GM12878 (cell line): ENCODE measurements at regions of chr12 and their contacts with region 1.

Region 1: GRCh38 chr12:94831081-94831751 is 172.3 kb downstream of the NDUFA12 start:
- DNase-seq: peak; percentile 98
- ATAC-seq: peak; percentile 89
- H3K4me3 ChIP-seq: peak overlapping the region; percentile 52
- H3K27ac ChIP-seq: peak overlapping the region; percentile 94
- H3K4me1 ChIP-seq: peaks cover 46% of the 10 kb centered on the region
- H3K27me3 ChIP-seq: no peaks in the 10 kb centered on the region
- CTCF ChIP-seq: no peak
- EP300 ChIP-seq: peak; percentile 92 to 94
- POLR2A ChIP-seq: peak; percentile 68
- RAD21 ChIP-seq: peak; percentile 25; the same call in 1 of the 2 replicates

Region 2: DNA sequence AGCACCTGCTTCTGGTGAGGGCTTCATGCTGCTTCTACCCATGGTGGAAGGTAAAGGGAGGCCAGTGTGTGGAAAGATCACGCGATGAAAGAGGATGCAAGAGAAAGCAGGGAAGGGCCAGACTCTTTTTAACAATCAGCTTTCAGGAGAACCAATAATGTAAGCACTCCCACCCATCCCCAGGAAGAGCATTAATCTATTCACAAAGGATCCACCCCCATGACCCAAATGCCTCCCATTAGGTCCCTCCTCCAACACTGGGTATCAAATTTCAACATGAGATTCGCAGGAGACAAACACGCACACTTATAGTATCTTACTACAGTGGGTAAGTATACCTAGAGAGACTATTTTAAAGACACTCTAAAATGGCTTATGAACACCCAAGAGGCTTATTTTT is 100.4 kb before region 1 on chr12:
- CTCF ChIA-PET with region 1: no interaction called
- POLR2A ChIA-PET with region 1: no interaction called
- RAD21 ChIA-PET with region 1: no interaction called
- SMC1A ChIA-PET with region 1: no interaction called
- in situ Hi-C with region 1: no loop called
- intact Hi-C with region 1: no loop called
- DNase-seq: no peak
- ATAC-seq: no peak
- H3K4me3 ChIP-seq: no peak overlapping the region
- H3K27ac ChIP-seq: no peak overlapping the region
- H3K4me1 ChIP-seq: peaks cover under 1% of the 10 kb centered on the region; the same call in 1 of the 2 replicates
- H3K27me3 ChIP-seq: no peaks in the 10 kb centered on the region
- CTCF ChIP-seq: no peak
- EP300 ChIP-seq: no peak
- POLR2A ChIP-seq: no peak
- RAD21 ChIP-seq: no peak

Region 3: DNA sequence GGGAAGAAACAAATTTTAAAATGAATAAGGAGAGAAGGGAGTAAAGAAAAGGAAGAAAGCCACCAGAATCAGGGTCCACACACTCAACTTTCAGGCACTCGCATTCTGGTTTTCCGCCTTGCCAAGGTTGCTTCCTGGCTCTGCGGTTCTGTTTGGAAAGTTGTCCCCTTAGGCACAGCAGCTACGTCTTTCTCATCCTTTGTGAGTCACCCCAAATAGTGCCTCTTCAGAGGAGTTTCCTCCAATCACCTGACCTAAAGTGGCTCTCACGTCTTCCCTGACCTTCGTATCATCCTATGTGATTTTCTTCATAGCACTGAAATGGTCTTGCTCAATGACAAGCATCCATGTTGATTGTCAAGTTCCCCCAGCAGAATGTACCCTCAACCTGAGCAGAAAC is 81.3 kb before region 1 on chr12:
- CTCF ChIA-PET with region 1: no interaction called
- POLR2A ChIA-PET with region 1: no interaction called
- RAD21 ChIA-PET with region 1: no interaction called
- SMC1A ChIA-PET with region 1: no interaction called
- in situ Hi-C with region 1: no loop called
- intact Hi-C with region 1: no loop called
- DNase-seq: no peak
- ATAC-seq: no peak
- H3K4me3 ChIP-seq: no peak overlapping the region
- H3K27ac ChIP-seq: no peak overlapping the region
- H3K4me1 ChIP-seq: no peaks in the 10 kb centered on the region
- H3K27me3 ChIP-seq: no peaks in the 10 kb centered on the region
- CTCF ChIP-seq: no peak
- EP300 ChIP-seq: no peak
- POLR2A ChIP-seq: no peak
- RAD21 ChIP-seq: no peak

Region 4: DNA sequence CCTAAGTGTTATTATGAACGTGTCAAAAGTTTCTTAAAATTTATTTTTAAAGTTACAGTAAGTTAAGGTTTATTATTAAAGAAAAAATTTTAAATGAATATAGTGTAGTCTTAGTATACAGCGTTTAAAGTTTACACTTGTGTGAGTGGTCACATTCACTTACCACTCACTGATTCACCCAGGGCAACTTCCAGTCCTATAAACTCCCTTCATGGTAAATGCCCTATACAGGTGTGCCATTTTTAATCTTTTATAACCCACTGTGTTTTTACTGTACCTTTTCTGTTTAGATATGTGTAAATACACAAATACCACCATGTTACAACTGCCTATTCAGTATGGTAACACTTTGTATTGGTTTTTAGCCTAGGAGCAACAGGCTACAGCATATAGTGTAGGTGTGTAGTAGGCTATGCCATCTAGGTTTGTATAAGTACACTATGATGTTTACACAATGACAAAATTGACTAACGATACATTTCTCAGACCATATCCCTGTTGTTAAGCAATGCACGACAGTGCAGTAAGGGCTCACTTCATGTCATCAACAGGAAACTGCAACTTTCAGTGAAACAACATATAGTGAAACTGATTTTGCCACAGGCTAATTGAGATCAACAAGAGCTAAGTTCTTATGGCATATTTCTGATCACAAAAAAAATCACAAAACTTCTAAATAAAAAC is 68.8 kb before region 1 on chr12:
- CTCF ChIA-PET with region 1: interaction called, 3 read pairs
- POLR2A ChIA-PET with region 1: no interaction called
- RAD21 ChIA-PET with region 1: interaction called, 10 read pairs
- SMC1A ChIA-PET with region 1: interaction called, 6 read pairs
- in situ Hi-C with region 1: no loop called
- intact Hi-C with region 1: no loop called
- DNase-seq: peak; percentile 56
- ATAC-seq: peak; percentile 85
- H3K4me3 ChIP-seq: no peak overlapping the region
- H3K27ac ChIP-seq: peak overlapping the region; percentile 35
- H3K4me1 ChIP-seq: peaks cover 30% of the 10 kb centered on the region
- H3K27me3 ChIP-seq: no peaks in the 10 kb centered on the region
- CTCF ChIP-seq: no peak
- EP300 ChIP-seq: peak in 1 of 2 experiments; percentile 46; a peak in 1 of 4 replicates
- POLR2A ChIP-seq: no peak
- RAD21 ChIP-seq: no peak

Region 5: DNA sequence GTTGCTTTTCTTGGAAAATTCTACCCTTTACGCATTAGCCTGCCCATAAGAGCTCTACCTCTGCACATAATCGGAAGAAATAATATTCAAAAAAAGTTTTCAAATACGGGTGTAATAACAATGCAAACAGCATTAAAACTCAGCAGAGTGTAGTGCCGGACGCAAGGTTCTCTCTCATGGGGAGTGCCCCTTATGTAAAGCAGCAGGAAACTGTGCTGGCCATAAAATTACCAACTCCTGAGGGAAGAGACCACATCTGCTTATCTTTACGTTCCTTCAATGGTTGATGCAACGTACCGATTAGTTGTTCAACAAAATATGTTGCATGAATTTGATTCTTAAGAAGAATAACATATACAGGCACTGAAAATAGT is 62.2 kb before region 1 on chr12:
- CTCF ChIA-PET with region 1: interaction called, 4 read pairs
- POLR2A ChIA-PET with region 1: interaction called, 8 read pairs
- RAD21 ChIA-PET with region 1: interaction called, 16 read pairs
- SMC1A ChIA-PET with region 1: interaction called, 18 read pairs
- in situ Hi-C with region 1: no loop called
- intact Hi-C with region 1: no loop called
- DNase-seq: peak; percentile 53
- ATAC-seq: peak; percentile 91
- H3K4me3 ChIP-seq: peak overlapping the region; percentile 55; the same call in 1 of the 2 replicates
- H3K27ac ChIP-seq: peak overlapping the region; percentile 78
- H3K4me1 ChIP-seq: peaks cover 37% of the 10 kb centered on the region
- H3K27me3 ChIP-seq: no peaks in the 10 kb centered on the region
- CTCF ChIP-seq: no peak
- EP300 ChIP-seq: no peak
- POLR2A ChIP-seq: peak; percentile 26; the same call in 1 of the 2 replicates
- RAD21 ChIP-seq: no peak

Region 6: DNA sequence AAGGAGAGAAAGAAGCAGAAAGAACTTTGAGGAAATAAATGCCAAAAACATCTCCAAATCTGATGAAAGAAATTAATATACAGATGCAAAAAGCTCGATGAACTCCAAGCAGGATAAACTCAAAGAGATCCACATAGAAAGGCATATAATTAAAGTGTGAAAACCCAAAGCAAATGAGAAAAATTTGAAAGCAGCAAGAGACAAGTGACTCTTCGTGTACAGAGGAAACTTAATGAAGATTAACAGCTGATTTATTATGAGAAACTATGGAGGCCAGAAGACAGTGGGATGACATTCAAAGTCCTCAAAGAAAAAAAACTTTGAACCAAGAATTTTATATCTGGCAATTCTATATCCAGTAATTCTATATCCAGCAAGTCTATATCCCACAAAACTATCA is 17.9 kb before region 1 on chr12:
- CTCF ChIA-PET with region 1: interaction called, 31 read pairs
- POLR2A ChIA-PET with region 1: interaction called, 44 read pairs
- RAD21 ChIA-PET with region 1: interaction called, 95 read pairs
- SMC1A ChIA-PET with region 1: interaction called, 99 read pairs
- in situ Hi-C with region 1: no loop called
- intact Hi-C with region 1: loop called (anchors 1 kb)
- DNase-seq: no peak
- ATAC-seq: no peak
- H3K4me3 ChIP-seq: peak overlapping the region; percentile 0; the same call in 1 of the 2 replicates
- H3K27ac ChIP-seq: peak overlapping the region; percentile 13; the same call in 1 of the 2 replicates
- H3K4me1 ChIP-seq: peaks cover 29% of the 10 kb centered on the region
- H3K27me3 ChIP-seq: no peaks in the 10 kb centered on the region
- CTCF ChIP-seq: no peak
- EP300 ChIP-seq: 0 out of 4 replicates have a peak, but pooled peaks of 1 of the 2 experiments have one; percentile 15
- POLR2A ChIP-seq: no peak
- RAD21 ChIP-seq: no peak

Region 7: DNA sequence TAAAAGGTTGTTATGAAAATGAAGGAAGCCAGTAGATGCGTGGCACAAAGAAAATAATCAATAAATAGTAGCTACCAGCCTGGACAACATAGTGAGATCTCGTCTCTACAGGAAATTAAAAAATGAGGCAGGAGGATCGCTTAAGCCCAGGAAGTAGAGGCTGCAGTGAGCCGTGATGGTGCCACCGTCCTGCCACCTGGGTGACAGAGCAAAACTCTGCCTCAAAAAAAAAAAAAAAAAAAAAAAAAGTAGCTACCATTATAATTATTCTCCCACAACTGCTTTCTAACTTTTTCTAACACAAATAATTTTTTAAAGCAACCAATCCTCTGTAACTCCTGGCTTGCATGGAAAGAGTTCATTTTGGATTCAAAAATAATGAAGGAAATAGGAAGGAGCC is 39.3 kb after region 1 on chr12:
- CTCF ChIA-PET with region 1: interaction called, 29 read pairs
- POLR2A ChIA-PET with region 1: interaction called, 9 read pairs
- RAD21 ChIA-PET with region 1: interaction called, 65 read pairs
- SMC1A ChIA-PET with region 1: interaction called, 75 read pairs
- in situ Hi-C with region 1: no loop called
- intact Hi-C with region 1: loop called (anchors 1 kb)
- DNase-seq: no peak
- ATAC-seq: no peak
- H3K4me3 ChIP-seq: peak overlapping the region; percentile 92
- H3K27ac ChIP-seq: peak overlapping the region; percentile 91
- H3K4me1 ChIP-seq: peaks cover 22% of the 10 kb centered on the region; the same call in 1 of the 2 replicates
- H3K27me3 ChIP-seq: no peaks in the 10 kb centered on the region
- CTCF ChIP-seq: no peak
- EP300 ChIP-seq: no peak
- POLR2A ChIP-seq: no peak
- RAD21 ChIP-seq: no peak

Region 8: GRCh38 chr12:95003213-95003920 is 172.2 kb after region 1 on chr12 and contains the start of gene NDUFA12:
- CTCF ChIA-PET with region 1: no interaction called
- POLR2A ChIA-PET with region 1: no interaction called
- RAD21 ChIA-PET with region 1: no interaction called
- SMC1A ChIA-PET with region 1: no interaction called
- in situ Hi-C with region 1: no loop called
- intact Hi-C with region 1: loop called (anchors 5 kb)
- DNase-seq: peak; percentile 91
- ATAC-seq: peak; percentile 99
- H3K4me3 ChIP-seq: peak within 1 kb of the TSS; percentile 85
- H3K27ac ChIP-seq: peak within 1 kb of the TSS; percentile 63
- H3K4me1 ChIP-seq: no peaks in the 10 kb centered on the region
- H3K27me3 ChIP-seq: no peaks in the 10 kb centered on the region
- CTCF ChIP-seq: no peak
- EP300 ChIP-seq: no peak
- POLR2A ChIP-seq: peak; percentile 95
- RAD21 ChIP-seq: 0 out of 2 replicates have a peak, but pooled peaks have one; percentile 14
- polyA plus RNA-seq, gene NDUFA12: 917 to 1,021 TPM